Gastrocnemius medialis (tissue), 4 donors: ENCODE measurements at regions of chr3 and their contacts with region 1.

Region 1: DNA sequence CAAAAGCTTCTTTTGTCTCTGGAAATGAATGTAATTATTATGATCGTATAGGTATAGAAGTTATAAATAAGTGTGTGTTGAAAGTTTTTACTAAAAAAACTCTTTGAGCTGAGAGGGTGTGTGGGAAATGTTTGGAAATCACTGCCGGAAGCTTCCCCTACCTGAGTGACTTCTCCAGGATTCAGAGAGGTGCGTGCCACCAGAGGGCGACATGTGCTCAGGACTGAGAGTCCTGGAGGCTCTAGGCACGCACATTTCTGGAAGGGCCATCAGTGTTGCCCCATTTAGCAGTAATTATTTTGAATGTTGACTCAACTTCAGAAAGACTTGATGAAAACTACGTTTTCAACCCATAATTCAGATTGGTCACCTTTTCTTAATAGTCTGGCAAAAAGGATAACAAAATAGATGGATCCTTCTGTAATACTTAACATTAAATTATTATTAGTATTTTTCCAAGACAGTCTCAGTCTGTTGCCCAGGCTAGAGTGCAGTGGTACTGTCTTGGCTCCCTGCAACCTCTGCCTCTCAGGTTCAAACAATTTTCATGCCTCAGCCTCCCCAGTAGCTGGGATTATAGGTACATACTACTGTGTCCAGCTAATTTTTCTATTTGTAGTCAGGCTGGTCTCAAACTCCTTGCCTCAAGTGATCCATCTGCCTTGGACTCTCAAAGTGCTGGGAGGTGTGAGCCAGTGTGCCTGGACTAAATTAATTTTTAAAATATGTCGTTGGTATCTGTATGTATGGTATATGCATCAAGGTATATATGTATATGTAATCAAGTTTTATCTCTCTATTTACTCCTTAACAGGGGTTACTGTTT is 34.5 kb downstream of the GPR171 start:
- DNase-seq: peak; percentile 69 to 77
- ATAC-seq: peak; percentile 67 to 68
- H3K4me3 ChIP-seq: no peak overlapping the region
- H3K27ac ChIP-seq: peak overlapping the region; percentile 77 to 86 (median 81)
- H3K4me1 ChIP-seq: peaks cover 14 to 16% of the 10 kb centered on the region in 2 donors
- H3K27me3 ChIP-seq: no peaks in the 10 kb centered on the region
- CTCF ChIP-seq: peak; percentile 65 to 84 (median 82)
- POLR2A ChIP-seq: no peak

Region 2: DNA sequence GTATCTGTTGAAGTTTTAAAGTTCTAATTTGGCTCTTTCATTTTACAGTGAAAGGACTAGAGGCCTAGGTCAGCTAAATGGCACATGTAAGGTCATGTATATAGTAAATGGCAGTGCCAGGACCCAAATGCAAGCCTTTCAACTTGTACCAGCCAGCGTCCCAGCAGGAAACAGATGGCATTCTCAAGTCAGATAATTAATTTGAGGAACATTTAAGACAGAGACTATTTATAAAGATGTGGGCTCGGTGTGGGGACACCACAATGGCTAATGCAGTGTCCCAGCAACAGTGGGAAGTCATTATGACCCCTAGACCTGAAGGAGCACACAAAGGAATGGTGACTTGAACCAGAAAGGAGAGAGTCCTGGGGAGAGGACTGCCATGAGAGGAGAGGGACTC is 269.3 kb before region 1 on chr3:
- in situ Hi-C with region 1: no loop called
- intact Hi-C with region 1: no loop called
- DNase-seq: no peak
- ATAC-seq: no peak
- H3K4me3 ChIP-seq: no peak overlapping the region
- H3K27ac ChIP-seq: no peak overlapping the region
- H3K4me1 ChIP-seq: no peaks in the 10 kb centered on the region
- H3K27me3 ChIP-seq: no peaks in the 10 kb centered on the region
- CTCF ChIP-seq: no peak
- POLR2A ChIP-seq: no peak

Region 3: DNA sequence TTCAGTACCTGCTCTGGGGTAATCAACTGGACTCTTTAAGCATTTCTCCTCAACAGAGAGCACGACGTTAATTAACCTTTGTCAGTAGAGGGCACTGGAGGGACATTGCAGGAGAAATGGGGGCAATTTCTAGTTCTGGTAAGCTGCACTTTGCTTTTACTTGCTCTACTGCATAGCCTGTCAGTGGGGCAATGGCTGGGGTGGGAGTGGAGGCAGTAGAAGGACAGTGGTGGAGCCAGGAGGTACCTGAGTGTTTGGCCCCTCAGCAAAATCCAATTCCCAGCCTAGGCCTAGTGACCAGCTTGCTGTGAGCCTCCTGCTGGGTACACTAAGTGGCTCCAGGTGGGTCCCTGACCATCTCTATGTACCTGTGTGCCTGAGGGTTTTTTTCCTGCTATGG is 101.3 kb before region 1 on chr3:
- in situ Hi-C with region 1: no loop called
- intact Hi-C with region 1: no loop called
- DNase-seq: no peak
- ATAC-seq: no peak
- H3K4me3 ChIP-seq: no peak overlapping the region
- H3K27ac ChIP-seq: no peak overlapping the region
- H3K4me1 ChIP-seq: no peaks in the 10 kb centered on the region
- H3K27me3 ChIP-seq: no peaks in the 10 kb centered on the region
- CTCF ChIP-seq: no peak
- POLR2A ChIP-seq: no peak

Region 4: GRCh38 chr3:151276687-151277042 is 108.2 kb after region 1 on chr3:
- in situ Hi-C with region 1: loop called (anchors 5 kb)
- intact Hi-C with region 1: no loop called
- DNase-seq: no peak
- ATAC-seq: no peak
- H3K4me3 ChIP-seq: peak overlapping the region in 3 of 4 donors; percentile 8 to 34 (median 9)
- H3K27ac ChIP-seq: peak overlapping the region; percentile 1 to 41 (median 26)
- H3K4me1 ChIP-seq: no peaks in the 10 kb centered on the region
- H3K27me3 ChIP-seq: no peaks in the 10 kb centered on the region
- CTCF ChIP-seq: no peak
- POLR2A ChIP-seq: no peak

Region 5: GRCh38 chr3:151282921-151283320 is 114.4 kb after region 1 on chr3:
- in situ Hi-C with region 1: loop called (anchors 5 kb)
- intact Hi-C with region 1: loop called (anchors 1 kb)
- DNase-seq: no peak
- ATAC-seq: peak; percentile 66 to 68
- H3K4me3 ChIP-seq: no peak overlapping the region
- H3K27ac ChIP-seq: peak overlapping the region in 1 of 4 donors; percentile 48
- H3K4me1 ChIP-seq: no peaks in the 10 kb centered on the region
- H3K27me3 ChIP-seq: no peaks in the 10 kb centered on the region
- CTCF ChIP-seq: peak; percentile 66 to 82 (median 72)
- POLR2A ChIP-seq: no peak

Region 6: DNA sequence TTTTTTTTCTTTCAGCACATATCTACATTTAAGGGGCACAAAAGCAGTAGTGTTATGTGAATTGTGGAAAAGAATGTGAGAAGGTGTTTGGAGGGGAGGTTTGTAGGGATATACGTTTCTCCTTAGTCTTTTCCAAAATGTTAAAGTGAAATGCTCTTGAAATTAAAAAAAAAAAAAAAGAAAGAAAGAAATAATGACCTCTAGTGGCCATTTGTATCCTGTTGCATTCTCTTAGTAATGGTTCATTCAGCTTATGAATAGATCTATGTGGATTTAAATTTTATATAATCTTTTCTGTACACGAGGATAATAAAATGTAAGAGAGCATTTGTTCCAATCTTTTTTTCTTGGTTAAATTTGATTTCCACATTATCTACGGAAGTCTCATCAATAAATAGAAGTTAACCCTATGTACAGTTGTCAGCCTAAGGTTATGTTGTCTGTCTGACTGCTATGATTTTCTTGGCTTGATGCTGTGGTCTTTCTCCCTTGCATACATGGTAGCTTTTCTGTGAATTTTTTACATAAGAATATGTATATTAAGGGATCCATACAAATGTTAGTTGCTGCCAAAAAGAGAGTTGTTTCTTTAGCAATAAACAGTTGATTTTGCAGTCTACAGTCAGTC is 159.2 kb after region 1 on chr3:
- in situ Hi-C with region 1: no loop called
- intact Hi-C with region 1: loop called (anchors 5 kb)
- DNase-seq: no peak
- ATAC-seq: no peak
- H3K4me3 ChIP-seq: peak overlapping the region in 1 of 4 donors; percentile 11
- H3K27ac ChIP-seq: no peak overlapping the region
- H3K4me1 ChIP-seq: no peaks in the 10 kb centered on the region
- H3K27me3 ChIP-seq: no peaks in the 10 kb centered on the region
- CTCF ChIP-seq: peak in 3 of 5 experiments; percentile 18 to 61 (median 42)
- POLR2A ChIP-seq: no peak

Region 7: GRCh38 chr3:151425627-151426335 is 257.3 kb after region 1 on chr3:
- in situ Hi-C with region 1: no loop called
- intact Hi-C with region 1: no loop called
- DNase-seq: no peak
- ATAC-seq: no peak
- H3K4me3 ChIP-seq: no peak overlapping the region
- H3K27ac ChIP-seq: no peak overlapping the region
- H3K4me1 ChIP-seq: no peaks in the 10 kb centered on the region
- H3K27me3 ChIP-seq: no peaks in the 10 kb centered on the region
- CTCF ChIP-seq: no peak
- POLR2A ChIP-seq: no peak

Region 8: GRCh38 chr3:151436675-151437446 is 268.4 kb after region 1 on chr3:
- in situ Hi-C with region 1: no loop called
- intact Hi-C with region 1: no loop called
- DNase-seq: no peak
- ATAC-seq: no peak
- H3K4me3 ChIP-seq: no peak overlapping the region
- H3K27ac ChIP-seq: no peak overlapping the region
- H3K4me1 ChIP-seq: no peaks in the 10 kb centered on the region
- H3K27me3 ChIP-seq: no peaks in the 10 kb centered on the region
- CTCF ChIP-seq: no peak
- POLR2A ChIP-seq: no peak